SK-N-SH (cell line): ENCODE measurements at regions of chr11 and their contacts with region 1.

Region 1: DNA sequence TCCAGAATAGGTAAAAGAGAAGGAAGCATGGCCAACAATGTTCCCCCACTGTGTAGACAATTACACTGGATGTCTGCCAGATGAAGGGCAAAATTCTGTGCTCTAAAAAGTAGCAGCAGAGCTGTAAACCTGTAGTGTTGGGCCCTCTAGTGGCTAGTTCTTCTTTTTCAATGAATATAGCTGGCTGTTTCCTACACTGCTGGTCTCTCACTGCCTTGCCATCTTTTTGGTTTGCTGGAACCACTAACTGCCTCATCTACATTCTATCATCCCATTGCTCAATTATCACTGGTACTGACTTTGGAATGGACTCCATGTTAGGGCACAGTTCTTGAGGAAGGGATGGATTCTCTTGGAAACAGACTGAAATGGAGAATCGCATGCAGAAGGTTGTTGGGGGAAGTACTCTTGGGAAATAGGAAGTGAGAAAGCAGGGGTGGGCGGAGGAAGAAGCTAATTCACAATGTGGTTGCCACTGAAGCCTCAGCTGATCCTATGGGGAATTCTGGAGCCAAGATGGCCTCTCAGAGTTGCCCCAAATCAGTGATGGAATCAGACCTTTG is 17.9 kb downstream of the KCNE3 start:
- DNase-seq: peak; percentile 56
- H3K4me3 ChIP-seq: no peak overlapping the region; a peak in 1 of 4 replicates
- H3K27ac ChIP-seq: no peak overlapping the region
- H3K4me1 ChIP-seq: peaks cover 0 to 17% of the 10 kb centered on the region in 2 experiments; a peak in 3 of 4 replicates
- H3K27me3 ChIP-seq: no peaks in the 10 kb centered on the region
- CTCF ChIP-seq: peak; percentile 77
- EP300 ChIP-seq: no peak
- RAD21 ChIP-seq: peak; percentile 98

Region 2: GRCh38 chr11:74248469-74248868 is 201.0 kb before region 1 on chr11:
- CTCF ChIA-PET with region 1: interaction called, 218 read pairs
- POLR2A ChIA-PET with region 1: no interaction called
- DNase-seq: no peak
- H3K4me3 ChIP-seq: no peak overlapping the region
- H3K27ac ChIP-seq: no peak overlapping the region
- H3K4me1 ChIP-seq: no peaks in the 10 kb centered on the region
- H3K27me3 ChIP-seq: no peaks in the 10 kb centered on the region
- CTCF ChIP-seq: no peak
- EP300 ChIP-seq: no peak
- RAD21 ChIP-seq: no peak

Region 3: DNA sequence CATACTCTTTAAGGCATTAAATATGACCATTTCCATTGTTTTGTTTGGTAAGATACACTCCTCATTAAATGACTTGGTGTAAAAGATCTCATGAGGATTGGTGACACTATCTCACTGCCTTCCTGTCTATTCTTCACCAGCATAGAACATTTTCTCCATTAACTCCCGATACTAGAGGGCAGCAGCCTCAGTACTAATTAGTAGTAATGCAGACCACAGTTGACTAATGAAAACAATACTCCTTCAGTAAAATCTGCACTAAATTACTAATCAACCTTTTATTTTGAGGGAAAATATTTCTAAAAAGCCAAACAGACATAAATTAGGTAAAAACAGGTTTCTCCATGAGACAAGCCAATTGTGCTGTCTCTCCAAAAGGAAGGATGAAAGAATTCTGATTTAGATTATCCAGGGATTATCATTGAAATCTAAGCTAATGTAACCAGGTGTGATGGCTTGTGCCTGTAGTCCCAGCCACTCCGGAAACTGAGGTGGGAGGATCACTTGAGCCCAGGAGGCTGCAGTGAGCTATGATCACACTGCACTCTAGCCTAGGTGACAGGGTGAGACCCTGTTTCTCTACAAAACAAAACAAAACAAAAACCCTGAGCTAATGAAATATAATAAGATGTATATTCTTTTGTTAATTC is 60.6 kb before region 1 on chr11:
- CTCF ChIA-PET with region 1: interaction called, 168 read pairs
- POLR2A ChIA-PET with region 1: interaction called, 3 read pairs
- DNase-seq: peak; percentile 59
- H3K4me3 ChIP-seq: no peak overlapping the region; a peak in 1 of 4 replicates
- H3K27ac ChIP-seq: no peak overlapping the region
- H3K4me1 ChIP-seq: peaks cover 3 to 9% of the 10 kb centered on the region in 2 experiments; a peak in 3 of 4 replicates
- H3K27me3 ChIP-seq: no peaks in the 10 kb centered on the region
- CTCF ChIP-seq: peak; percentile 90
- EP300 ChIP-seq: no peak
- RAD21 ChIP-seq: peak; percentile 73

Region 4: GRCh38 chr11:74462009-74462408 is 12.6 kb after region 1 on chr11:
- CTCF ChIA-PET with region 1: interaction called, 40 read pairs
- POLR2A ChIA-PET with region 1: no interaction called
- DNase-seq: no peak
- H3K4me3 ChIP-seq: no peak overlapping the region
- H3K27ac ChIP-seq: no peak overlapping the region
- H3K4me1 ChIP-seq: no peaks in the 10 kb centered on the region
- H3K27me3 ChIP-seq: no peaks in the 10 kb centered on the region; the same call in 1 of the 2 replicates
- CTCF ChIP-seq: no peak
- EP300 ChIP-seq: no peak
- RAD21 ChIP-seq: no peak

Region 5: DNA sequence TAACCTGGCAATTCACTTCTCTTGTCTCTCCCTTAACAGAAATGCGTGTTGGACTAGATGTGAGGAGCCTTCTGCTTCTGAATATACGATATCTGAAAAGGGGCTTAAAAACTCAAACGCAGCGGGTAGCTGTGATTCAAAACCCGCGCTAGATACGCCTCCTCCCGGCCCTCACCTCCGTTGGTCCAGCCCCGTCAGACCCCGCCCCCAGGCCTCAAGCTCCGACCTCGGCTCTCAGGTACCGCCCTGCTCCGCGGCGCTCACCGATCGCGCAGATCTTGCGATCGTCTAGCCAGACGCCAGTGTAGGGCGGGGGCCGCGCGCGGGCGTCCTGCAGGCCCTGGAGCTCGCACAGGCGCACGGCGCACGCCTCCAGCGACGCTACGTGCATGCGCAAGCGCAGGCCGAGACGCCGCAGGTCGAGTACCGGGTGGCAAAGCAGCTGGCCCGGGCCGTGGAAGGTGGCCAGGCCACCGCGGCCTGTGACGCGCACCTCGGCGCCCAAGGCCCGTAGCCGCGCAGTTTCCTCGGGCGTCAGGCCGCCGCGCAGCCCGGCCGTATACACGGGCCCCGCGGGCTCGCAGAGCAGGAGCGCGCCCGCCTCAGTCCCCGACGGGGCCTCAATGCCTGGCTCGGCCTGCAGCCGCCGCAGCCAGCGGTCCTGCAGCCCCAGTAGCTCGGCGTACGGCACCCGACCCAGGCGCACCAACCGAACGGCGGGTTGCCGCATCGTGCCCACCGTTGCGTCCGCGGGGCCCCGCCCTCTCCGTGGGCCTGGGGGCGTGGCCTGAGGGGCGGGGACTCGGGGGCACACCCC is 43.7 kb after region 1 on chr11 and contains the start of gene LIPT2:
- CTCF ChIA-PET with region 1: interaction called, 19 read pairs
- POLR2A ChIA-PET with region 1: interaction called, 3 read pairs
- DNase-seq: peak; percentile 93
- H3K4me3 ChIP-seq: peak within 1 kb of the TSS; percentile 76 to 90
- H3K27ac ChIP-seq: peak within 1 kb of the TSS; percentile 79 to 98
- H3K4me1 ChIP-seq: peaks cover 0 to 10% of the 10 kb centered on the region in 2 experiments; a peak in 2 of 4 replicates
- H3K27me3 ChIP-seq: no peaks in the 10 kb centered on the region
- CTCF ChIP-seq: no peak
- EP300 ChIP-seq: peak in 1 of 2 experiments; percentile 35; a peak in 1 of 4 replicates
- RAD21 ChIP-seq: no peak
- polyA plus RNA-seq, gene LIPT2: 4.6 and 5.3 TPM in 2 replicates